H1 (cell line): ENCODE measurements at regions of chr3 and their contacts with region 1.

Region 1: DNA sequence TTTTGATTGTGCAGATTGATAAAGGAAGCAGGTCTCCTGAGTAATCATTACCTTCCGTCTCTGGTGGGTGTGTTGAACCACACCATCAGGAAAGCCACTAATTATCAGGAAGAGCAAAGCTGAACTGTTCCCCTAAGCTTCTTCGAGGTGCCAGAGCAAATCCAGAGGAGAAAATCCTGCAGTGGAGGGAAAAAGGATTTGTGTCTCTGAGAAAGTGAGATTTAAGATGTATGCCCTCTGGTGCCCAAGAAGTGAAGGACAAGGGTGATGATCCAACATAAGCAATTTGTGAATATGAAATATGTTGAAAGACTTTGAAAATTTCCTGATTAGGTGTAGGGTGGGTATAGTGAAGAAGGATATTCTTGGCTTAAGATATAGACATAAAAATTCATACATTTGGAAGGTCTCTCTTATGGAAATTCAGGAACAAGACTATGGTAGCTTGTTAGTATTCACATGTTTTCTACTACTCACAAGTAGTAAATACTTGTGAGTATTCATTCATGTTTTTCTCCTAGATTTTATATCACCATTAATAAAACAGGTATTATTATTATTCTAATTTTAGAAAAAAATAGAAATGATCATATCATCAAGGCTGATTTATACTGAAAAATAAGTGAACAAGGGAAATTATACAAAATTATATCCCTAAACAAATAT is 34.8 kb downstream of the COMMD2 start:
- DNase-seq: peak in 1 of 2 experiments; percentile 57
- H3K4me3 ChIP-seq: no peak overlapping the region
- H3K27ac ChIP-seq: no peak overlapping the region
- H3K4me1 ChIP-seq: no peaks in the 10 kb centered on the region; a peak in 1 of 7 replicates
- H3K27me3 ChIP-seq: no peaks in the 10 kb centered on the region
- CTCF ChIP-seq: peak in 2 of 3 experiments; percentile 59 to 74; a peak in 2 of 4 replicates
- EP300 ChIP-seq: no peak
- POLR2A ChIP-seq: no peak
- RAD21 ChIP-seq: peak; percentile 81 to 82

Region 2: GRCh38 chr3:149575961-149576564 is 141.5 kb before region 1 on chr3:
- CTCF ChIA-PET with region 1: interaction called, 72 read pairs
- POLR2A ChIA-PET with region 1: no interaction called
- DNase-seq: no peak
- H3K4me3 ChIP-seq: no peak overlapping the region; a peak in 1 of 8 replicates
- H3K27ac ChIP-seq: no peak overlapping the region
- H3K4me1 ChIP-seq: peaks cover 0 to 15% (median 14%) of the 10 kb centered on the region in 4 experiments; a peak in 5 of 7 replicates
- H3K27me3 ChIP-seq: no peaks in the 10 kb centered on the region
- CTCF ChIP-seq: no peak
- EP300 ChIP-seq: no peak
- POLR2A ChIP-seq: no peak
- RAD21 ChIP-seq: no peak

Region 3: DNA sequence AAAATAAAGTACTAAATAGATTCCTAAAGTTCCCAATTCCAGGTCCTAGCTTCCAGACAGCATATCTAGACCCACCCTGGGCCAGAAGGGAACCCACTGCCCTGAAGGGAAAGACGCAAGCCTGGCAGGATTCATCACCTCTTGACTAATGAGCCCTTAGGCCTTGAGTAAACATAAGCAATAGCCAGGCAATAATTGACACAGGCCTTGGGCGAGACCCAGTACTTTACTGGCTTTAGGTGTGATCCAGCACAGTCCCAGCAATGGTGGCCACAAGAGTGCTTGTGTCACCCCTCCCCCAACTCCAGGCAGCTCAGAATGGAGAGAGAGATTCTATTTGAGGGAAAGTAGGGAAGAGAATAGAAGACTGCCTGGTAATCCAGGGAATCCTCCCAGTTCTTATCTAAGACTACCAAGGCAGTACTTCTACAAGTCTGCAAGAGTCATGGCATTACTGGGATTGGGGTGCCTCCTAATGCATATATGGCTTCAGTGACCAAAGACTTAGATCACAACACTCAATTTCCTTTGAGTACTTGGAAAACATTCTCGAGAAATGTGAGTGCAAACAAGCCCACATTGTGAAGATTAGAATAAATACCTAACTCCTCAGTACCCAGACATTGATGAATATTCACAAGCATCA is 29.3 kb before region 1 on chr3:
- CTCF ChIA-PET with region 1: interaction called, 10 read pairs
- POLR2A ChIA-PET with region 1: no interaction called
- DNase-seq: no peak
- H3K4me3 ChIP-seq: no peak overlapping the region
- H3K27ac ChIP-seq: no peak overlapping the region
- H3K4me1 ChIP-seq: no peaks in the 10 kb centered on the region
- H3K27me3 ChIP-seq: no peaks in the 10 kb centered on the region
- CTCF ChIP-seq: peak in 2 of 3 experiments; percentile 9 to 22; a peak in 2 of 4 replicates
- EP300 ChIP-seq: no peak
- POLR2A ChIP-seq: no peak
- RAD21 ChIP-seq: peak; percentile 49 to 56

Region 4: DNA sequence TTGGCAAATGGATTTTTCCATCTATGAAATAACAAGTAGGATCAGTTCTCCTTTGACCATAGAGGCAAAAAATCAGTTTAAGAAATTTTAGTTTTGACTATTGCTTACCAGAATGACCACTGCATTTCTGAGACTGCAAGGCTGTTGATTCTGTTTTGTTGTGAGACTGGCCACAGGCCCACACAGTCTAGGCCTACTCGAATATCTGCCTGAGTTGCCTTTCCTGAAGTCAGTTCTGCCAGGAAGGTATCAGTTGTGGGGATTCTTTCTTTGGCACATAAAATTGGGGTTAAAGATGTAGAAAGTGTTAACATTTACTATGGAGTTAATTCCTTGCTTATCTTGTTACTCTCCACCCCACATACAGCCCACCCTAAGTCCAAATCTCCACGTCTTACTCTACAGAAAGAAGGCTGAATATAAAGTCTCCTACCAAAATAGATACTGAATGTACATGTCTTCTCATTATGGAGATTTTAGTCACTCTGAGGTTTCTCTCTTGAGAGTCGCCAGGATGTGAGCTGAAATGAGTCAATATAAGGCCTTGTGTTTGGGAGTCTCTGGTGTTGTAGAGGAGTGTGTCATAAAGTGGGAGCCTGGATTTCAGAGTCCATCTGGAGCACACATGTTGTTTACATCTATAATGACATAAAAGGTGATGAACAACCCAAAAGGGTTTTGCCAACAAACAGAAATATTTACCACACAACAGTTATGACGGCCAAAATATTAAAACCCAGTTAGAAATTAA is 14.7 kb before region 1 on chr3:
- CTCF ChIA-PET with region 1: interaction called, 18 read pairs
- POLR2A ChIA-PET with region 1: no interaction called
- DNase-seq: no peak
- H3K4me3 ChIP-seq: no peak overlapping the region
- H3K27ac ChIP-seq: no peak overlapping the region
- H3K4me1 ChIP-seq: peaks cover 0 to 5% (median 2%) of the 10 kb centered on the region in 4 experiments; a peak in 3 of 7 replicates
- H3K27me3 ChIP-seq: no peaks in the 10 kb centered on the region
- CTCF ChIP-seq: no peak
- EP300 ChIP-seq: no peak
- POLR2A ChIP-seq: no peak
- RAD21 ChIP-seq: no peak